GM12878 (cell line): ENCODE measurements at regions of chr4 and their contacts with region 1.

Region 1: GRCh38 chr4:85968945-85969819 is 390.7 kb downstream of the MAPK10 start:
- DNase-seq: no peak
- ATAC-seq: peak; percentile 78
- H3K4me3 ChIP-seq: no peak overlapping the region
- H3K27ac ChIP-seq: no peak overlapping the region
- H3K4me1 ChIP-seq: no peaks in the 10 kb centered on the region
- H3K27me3 ChIP-seq: no peaks in the 10 kb centered on the region
- CTCF ChIP-seq: peak; percentile 40 to 59 (median 51); a peak in 5 of 6 replicates
- EP300 ChIP-seq: no peak
- POLR2A ChIP-seq: no peak
- RAD21 ChIP-seq: peak; percentile 68

Region 2: DNA sequence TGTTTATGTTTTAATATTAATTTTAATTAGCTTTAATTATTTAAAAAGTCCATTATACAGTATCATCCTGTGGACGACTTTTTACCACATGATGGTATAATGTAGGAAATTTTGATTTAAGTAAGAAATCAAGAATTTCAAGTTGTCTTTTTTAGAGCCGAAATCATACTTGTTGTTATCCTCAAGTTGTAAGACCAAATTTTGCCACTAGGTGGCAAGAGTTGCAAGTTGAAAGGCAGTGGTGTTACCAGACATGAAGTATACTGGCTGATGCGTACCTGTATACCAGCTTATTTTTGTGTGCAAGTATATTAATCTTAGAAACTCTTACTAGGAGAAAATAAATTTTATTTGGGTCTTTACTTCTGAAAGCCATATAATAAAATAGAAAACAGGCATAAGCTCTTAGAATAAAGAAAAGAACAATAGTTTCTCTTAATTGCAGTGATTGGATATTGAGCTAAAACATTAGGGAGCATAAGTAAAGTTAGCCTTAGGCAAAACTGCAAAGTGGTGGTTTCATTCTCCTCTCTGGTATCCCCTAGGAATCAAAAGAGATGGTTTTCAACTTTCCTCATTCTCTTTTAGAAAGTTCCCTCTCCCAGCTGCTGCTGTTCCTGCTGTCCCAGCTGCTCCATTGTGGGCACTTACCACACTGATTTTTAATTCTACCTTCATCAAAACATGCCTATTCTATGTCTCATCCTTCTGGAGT is 884.6 kb before region 1 on chr4:
- CTCF ChIA-PET with region 1: interaction called, 6 read pairs
- POLR2A ChIA-PET with region 1: no interaction called
- RAD21 ChIA-PET with region 1: interaction called, 4 read pairs
- SMC1A ChIA-PET with region 1: interaction called, 3 read pairs
- in situ Hi-C with region 1: no loop called
- intact Hi-C with region 1: loop called (anchors 2 kb)
- DNase-seq: no peak
- ATAC-seq: peak; percentile 84
- H3K4me3 ChIP-seq: no peak overlapping the region
- H3K27ac ChIP-seq: no peak overlapping the region
- H3K4me1 ChIP-seq: no peaks in the 10 kb centered on the region
- H3K27me3 ChIP-seq: no peaks in the 10 kb centered on the region
- CTCF ChIP-seq: peak; percentile 58 to 60 (median 60)
- EP300 ChIP-seq: no peak
- POLR2A ChIP-seq: no peak
- RAD21 ChIP-seq: peak; percentile 58

Region 3: GRCh38 chr4:85423431-85423830 is 545.8 kb before region 1 on chr4:
- CTCF ChIA-PET with region 1: no interaction called
- POLR2A ChIA-PET with region 1: no interaction called
- RAD21 ChIA-PET with region 1: no interaction called
- SMC1A ChIA-PET with region 1: no interaction called
- in situ Hi-C with region 1: no loop called
- intact Hi-C with region 1: loop called (anchors 10 kb)
- DNase-seq: no peak
- ATAC-seq: peak; percentile 73
- H3K4me3 ChIP-seq: no peak overlapping the region
- H3K27ac ChIP-seq: no peak overlapping the region
- H3K4me1 ChIP-seq: no peaks in the 10 kb centered on the region
- H3K27me3 ChIP-seq: peaks cover 0 to 1% of the 10 kb centered on the region in 2 experiments; a peak in 1 of 4 replicates
- CTCF ChIP-seq: no peak
- EP300 ChIP-seq: no peak
- POLR2A ChIP-seq: no peak
- RAD21 ChIP-seq: no peak

Region 4: GRCh38 chr4:85798012-85798770 is 171.0 kb before region 1 on chr4:
- CTCF ChIA-PET with region 1: interaction called, 13 read pairs
- POLR2A ChIA-PET with region 1: no interaction called
- RAD21 ChIA-PET with region 1: interaction called, 6 read pairs
- SMC1A ChIA-PET with region 1: no interaction called
- in situ Hi-C with region 1: no loop called
- intact Hi-C with region 1: loop called (anchors 5 kb)
- DNase-seq: no peak
- ATAC-seq: no peak
- H3K4me3 ChIP-seq: no peak overlapping the region
- H3K27ac ChIP-seq: no peak overlapping the region
- H3K4me1 ChIP-seq: no peaks in the 10 kb centered on the region
- H3K27me3 ChIP-seq: no peaks in the 10 kb centered on the region
- CTCF ChIP-seq: no peak
- EP300 ChIP-seq: no peak
- POLR2A ChIP-seq: no peak
- RAD21 ChIP-seq: no peak

Region 5: GRCh38 chr4:86032476-86033022 is 63.4 kb after region 1 on chr4:
- CTCF ChIA-PET with region 1: no interaction called
- POLR2A ChIA-PET with region 1: no interaction called
- RAD21 ChIA-PET with region 1: no interaction called
- SMC1A ChIA-PET with region 1: no interaction called
- in situ Hi-C with region 1: no loop called
- intact Hi-C with region 1: no loop called
- DNase-seq: no peak
- ATAC-seq: no peak
- H3K4me3 ChIP-seq: no peak overlapping the region
- H3K27ac ChIP-seq: no peak overlapping the region
- H3K4me1 ChIP-seq: no peaks in the 10 kb centered on the region
- H3K27me3 ChIP-seq: no peaks in the 10 kb centered on the region
- CTCF ChIP-seq: no peak
- EP300 ChIP-seq: no peak
- POLR2A ChIP-seq: no peak
- RAD21 ChIP-seq: no peak

Region 6: DNA sequence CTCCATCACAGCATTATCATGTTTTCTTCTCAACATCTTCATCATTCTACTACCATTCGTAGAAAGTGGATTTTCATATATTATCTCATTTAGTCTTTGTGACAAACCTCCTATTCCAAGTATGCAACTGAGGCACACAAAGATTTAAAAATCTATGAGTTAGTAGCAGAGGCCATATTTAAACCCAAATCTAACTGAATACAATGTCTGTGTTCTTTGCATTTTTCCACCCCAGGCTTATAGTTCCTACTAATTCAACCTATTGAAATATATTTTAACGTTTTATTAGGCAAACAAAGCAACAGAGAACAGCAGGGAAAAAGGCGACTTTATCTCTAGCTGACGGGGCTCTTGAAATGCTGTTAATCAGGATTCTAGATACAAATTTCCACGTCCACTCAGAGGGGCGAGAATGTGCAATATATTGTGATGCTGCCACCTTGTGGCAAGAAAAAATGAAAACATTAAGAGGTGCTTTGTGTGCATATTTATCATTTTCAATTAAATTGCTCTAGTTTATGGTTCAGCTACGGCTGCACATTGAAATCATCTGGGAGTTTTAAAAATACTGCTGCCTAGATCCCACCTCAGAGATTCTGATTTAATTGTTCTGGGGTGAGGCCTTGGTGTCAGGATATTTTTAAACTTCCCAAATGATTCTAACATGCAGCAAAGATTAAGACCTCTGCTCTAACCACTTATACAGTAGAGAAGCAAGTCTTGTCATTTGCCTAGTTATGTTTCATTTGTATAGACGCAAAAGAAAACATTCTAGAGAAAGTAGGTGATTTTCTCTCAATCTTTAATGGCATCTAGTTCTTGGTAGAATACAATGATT is 74.8 kb after region 1 on chr4:
- CTCF ChIA-PET with region 1: interaction called, 13 read pairs
- POLR2A ChIA-PET with region 1: no interaction called
- RAD21 ChIA-PET with region 1: interaction called, 4 read pairs
- SMC1A ChIA-PET with region 1: no interaction called
- in situ Hi-C with region 1: no loop called
- intact Hi-C with region 1: loop called (anchors 5 kb)
- DNase-seq: no peak
- ATAC-seq: peak; percentile 79
- H3K4me3 ChIP-seq: no peak overlapping the region
- H3K27ac ChIP-seq: no peak overlapping the region
- H3K4me1 ChIP-seq: no peaks in the 10 kb centered on the region
- H3K27me3 ChIP-seq: no peaks in the 10 kb centered on the region
- CTCF ChIP-seq: peak; percentile 30 to 58 (median 54); a peak in 5 of 6 replicates
- EP300 ChIP-seq: no peak
- POLR2A ChIP-seq: no peak
- RAD21 ChIP-seq: peak; percentile 69